OCI-LY7 (cell line): ENCODE measurements at regions of chr11 and their contacts with region 1.

Region 1: GRCh38 chr11:65040847-65041621 is at the start of gene SAC3D1:
- DNase-seq: peak; percentile 94
- H3K4me3 ChIP-seq: peak within 1 kb of the TSS; percentile 76
- H3K27ac ChIP-seq: peak within 1 kb of the TSS; percentile 84
- H3K4me1 ChIP-seq: peaks cover 36% of the 10 kb centered on the region
- CTCF ChIP-seq: no peak
- total RNA-seq, gene SAC3D1: 23.3 and 28.2 TPM in 2 replicates

Region 2: DNA sequence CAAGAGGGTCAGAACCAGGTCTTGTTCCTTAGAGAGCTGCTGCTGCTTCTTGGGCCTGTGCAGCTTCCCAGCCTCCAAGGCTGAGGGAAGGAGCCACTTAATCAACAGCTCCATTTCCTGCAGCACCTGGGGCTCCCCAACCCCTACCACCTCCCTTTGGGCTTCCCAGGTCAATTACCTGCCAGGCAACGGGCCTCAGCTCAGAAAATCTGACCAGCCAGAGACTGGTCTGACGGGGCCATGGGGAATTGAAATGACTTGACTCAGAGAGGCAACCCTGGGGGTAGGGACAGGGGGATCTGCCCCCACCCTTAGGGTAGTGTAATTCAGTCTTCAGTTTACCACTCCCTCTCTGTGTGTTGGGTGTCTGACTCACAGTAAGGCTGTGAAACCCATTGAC is 64.4 kb before region 1 on chr11:
- CTCF ChIA-PET with region 1: no interaction called
- POLR2A ChIA-PET with region 1: no interaction called
- intact Hi-C with region 1: no loop called
- DNase-seq: no peak
- H3K4me3 ChIP-seq: no peak overlapping the region
- H3K27ac ChIP-seq: peak overlapping the region; percentile 25
- H3K4me1 ChIP-seq: peaks cover 51% of the 10 kb centered on the region
- CTCF ChIP-seq: no peak

Region 3: DNA sequence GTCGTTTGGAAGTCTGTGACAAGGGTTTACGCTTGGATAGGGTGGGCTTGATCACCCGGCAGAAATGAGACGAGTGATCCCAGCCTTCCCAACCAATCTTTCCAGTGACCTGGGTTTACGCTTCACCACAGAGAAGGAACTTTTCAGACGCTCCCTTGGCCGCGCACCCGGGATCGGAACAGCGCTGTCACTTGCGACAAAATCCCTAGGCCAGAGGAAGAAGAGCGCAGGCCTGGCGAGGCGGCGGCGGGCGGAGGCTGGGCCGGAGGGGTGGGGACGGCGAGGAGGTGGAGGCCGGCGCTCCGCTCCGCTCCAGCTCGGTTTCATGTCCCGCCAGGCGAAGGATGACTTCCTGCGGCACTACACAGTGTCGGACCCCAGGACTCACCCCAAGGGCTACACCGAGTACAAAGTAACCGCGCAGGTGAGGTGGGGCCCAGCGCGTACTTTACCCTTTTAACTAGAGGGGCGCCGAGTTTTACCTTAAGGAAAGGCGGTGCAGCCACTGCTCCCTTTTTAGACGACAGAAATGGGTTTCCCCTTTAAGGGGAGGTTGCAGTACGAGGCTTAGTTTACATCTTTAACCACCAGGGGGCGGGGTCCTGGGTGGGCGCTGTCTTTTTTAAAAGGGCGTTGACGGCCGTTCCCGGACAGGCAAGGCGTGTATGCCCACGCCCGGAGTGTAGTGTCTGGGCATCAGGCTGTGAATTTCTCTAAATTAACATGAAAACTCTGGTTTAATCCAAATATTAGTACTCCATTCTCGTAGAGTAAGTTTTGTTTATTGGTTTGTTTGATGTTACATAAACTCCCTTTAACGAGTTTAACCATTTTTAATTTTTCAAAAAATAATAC is 13.6 kb before region 1 on chr11 and contains the start of gene SNX15:
- CTCF ChIA-PET with region 1: no interaction called
- POLR2A ChIA-PET with region 1: interaction called, 8 read pairs
- intact Hi-C with region 1: loop called (anchors 1 kb)
- DNase-seq: peak; percentile 99
- H3K4me3 ChIP-seq: peak within 1 kb of the TSS; percentile 66
- H3K27ac ChIP-seq: peak within 1 kb of the TSS; percentile 75
- H3K4me1 ChIP-seq: peaks cover 18% of the 10 kb centered on the region
- CTCF ChIP-seq: peak; percentile 57
- total RNA-seq, gene SNX15: 25.9 and 31.6 TPM in 2 replicates

Region 4: GRCh38 chr11:65095974-65096806 is 55.2 kb after region 1 on chr11 and contains the start of gene VPS51:
- CTCF ChIA-PET with region 1: no interaction called
- POLR2A ChIA-PET with region 1: interaction called, 4 read pairs
- intact Hi-C with region 1: loop called (anchors 1 kb)
- DNase-seq: peak; percentile 94
- H3K4me3 ChIP-seq: peak within 1 kb of the TSS; percentile 78
- H3K27ac ChIP-seq: peak within 1 kb of the TSS; percentile 68
- H3K4me1 ChIP-seq: peaks cover 16% of the 10 kb centered on the region
- CTCF ChIP-seq: no peak
- total RNA-seq, gene VPS51: 214 and 221 TPM in 2 replicates

Region 5: GRCh38 chr11:65117216-65118096 is 76.4 kb after region 1 on chr11 and contains the start of gene ZNHIT2:
- CTCF ChIA-PET with region 1: no interaction called
- POLR2A ChIA-PET with region 1: no interaction called
- intact Hi-C with region 1: no loop called
- DNase-seq: peak; percentile 100
- H3K4me3 ChIP-seq: peak within 1 kb of the TSS; percentile 81
- H3K27ac ChIP-seq: peak within 1 kb of the TSS; percentile 78
- H3K4me1 ChIP-seq: peaks cover 62% of the 10 kb centered on the region
- CTCF ChIP-seq: peak; percentile 92
- total RNA-seq, gene ZNHIT2: 29.9 and 32.4 TPM in 2 replicates